CD14-positive monocyte (primary cell): ENCODE measurements at regions of chr3 and their contacts with region 1.

Region 1: GRCh38 chr3:42880601-42881451 is 5.1 kb upstream of the CYP8B1 start:
- DNase-seq: peak; percentile 77 to 84 (median 80)
- H3K4me3 ChIP-seq: peak overlapping the region; percentile 38 to 76 (median 68)
- H3K4me3 Mint-ChIP-seq: peak overlapping the region; percentile 74 to 91
- H3K27ac ChIP-seq: peak overlapping the region in 1 of 2 donors; percentile 19
- H3K27ac Mint-ChIP-seq: peak overlapping the region in 4 of 7 donors; percentile 40 to 71 (median 68)
- H3K4me1 ChIP-seq: peaks cover 13 to 14% of the 10 kb centered on the region in 2 donors
- H3K4me1 Mint-ChIP-seq: peaks cover 10% of the 10 kb centered on the region
- H3K27me3 ChIP-seq: peaks cover 0 to 10% of the 10 kb centered on the region in 2 donors
- H3K27me3 Mint-ChIP-seq: peaks cover 6 to 9% (median 6%) of the 10 kb centered on the region in 3 donors
- CTCF ChIP-seq: peak; percentile 86

Region 2: GRCh38 chr3:42490243-42490642 is 390.6 kb before region 1 on chr3:
- intact Hi-C with region 1: no loop called
- DNase-seq: peak; percentile 78 to 82 (median 82)
- H3K4me3 ChIP-seq: peak overlapping the region in 1 of 3 experiments; percentile 29
- H3K4me3 Mint-ChIP-seq: peak overlapping the region in 1 of 2 donors; percentile 42
- H3K27ac ChIP-seq: peak overlapping the region; percentile 51 to 86
- H3K27ac Mint-ChIP-seq: peak overlapping the region; percentile 55 to 90 (median 81)
- H3K4me1 ChIP-seq: peaks cover 64 to 73% of the 10 kb centered on the region in 2 donors
- H3K4me1 Mint-ChIP-seq: peaks cover 60% of the 10 kb centered on the region
- H3K27me3 ChIP-seq: no peaks in the 10 kb centered on the region
- H3K27me3 Mint-ChIP-seq: peaks cover 3 to 6% (median 4%) of the 10 kb centered on the region in 3 donors
- CTCF ChIP-seq: no peak

Region 3: GRCh38 chr3:42780892-42781700 is 99.7 kb before region 1 on chr3:
- intact Hi-C with region 1: loop called (anchors 2 to 5 kb)
- DNase-seq: peak; percentile 69 to 79 (median 77)
- H3K4me3 ChIP-seq: no peak overlapping the region
- H3K4me3 Mint-ChIP-seq: no peak overlapping the region
- H3K27ac ChIP-seq: no peak overlapping the region
- H3K27ac Mint-ChIP-seq: peak overlapping the region in 3 of 7 donors; percentile 35 to 56 (median 51)
- H3K4me1 ChIP-seq: no peaks in the 10 kb centered on the region
- H3K4me1 Mint-ChIP-seq: peaks cover 5% of the 10 kb centered on the region
- H3K27me3 ChIP-seq: no peaks in the 10 kb centered on the region
- H3K27me3 Mint-ChIP-seq: peaks cover 0 to 2% (median 1%) of the 10 kb centered on the region in 3 donors
- CTCF ChIP-seq: peak; percentile 84

Region 4: GRCh38 chr3:42831321-42831713 is 49.5 kb before region 1 on chr3:
- intact Hi-C with region 1: loop called (anchors 2 kb)
- DNase-seq: peak; percentile 65 to 81 (median 73)
- H3K4me3 ChIP-seq: no peak overlapping the region
- H3K4me3 Mint-ChIP-seq: no peak overlapping the region
- H3K27ac ChIP-seq: no peak overlapping the region
- H3K27ac Mint-ChIP-seq: no peak overlapping the region
- H3K4me1 ChIP-seq: no peaks in the 10 kb centered on the region
- H3K4me1 Mint-ChIP-seq: peaks cover 6% of the 10 kb centered on the region
- H3K27me3 ChIP-seq: no peaks in the 10 kb centered on the region
- H3K27me3 Mint-ChIP-seq: peaks cover 1 to 4% (median 1%) of the 10 kb centered on the region in 3 donors
- CTCF ChIP-seq: peak; percentile 90

Region 5: GRCh38 chr3:42906070-42906847 is 25.4 kb after region 1 on chr3 and contains the start of gene ZNF662:
- intact Hi-C with region 1: no loop called
- DNase-seq: no peak
- H3K4me3 ChIP-seq: peak within 1 kb of the TSS; percentile 15 to 71 (median 44)
- H3K4me3 Mint-ChIP-seq: peak within 1 kb of the TSS; percentile 72 to 85
- H3K27ac ChIP-seq: no peak within 1 kb of the TSS
- H3K27ac Mint-ChIP-seq: peak within 1 kb of the TSS in 2 of 7 donors; percentile 3 to 60
- H3K4me1 ChIP-seq: peaks cover 12% of the 10 kb centered on the region in 2 donors
- H3K4me1 Mint-ChIP-seq: peaks cover 16% of the 10 kb centered on the region
- H3K27me3 ChIP-seq: peaks cover 14 to 26% of the 10 kb centered on the region in 2 donors
- H3K27me3 Mint-ChIP-seq: peaks cover 32 to 34% (median 32%) of the 10 kb centered on the region in 3 donors
- CTCF ChIP-seq: no peak
- polyA plus RNA-seq, gene ZNF662: 0.09 TPM in 1 of 3 donors, not detected in the others